ENCODE measurements at regions of chr10 and their contacts with region 1.

Region 1: GRCh38 chr10:93680412-93681047 is 21.9 kb downstream of the FRA10AC1 start:
- DNase-seq: peak; percentile 38
- ATAC-seq: peak; percentile 31; the same call in 1 of the 3 replicates
- H3K4me3 ChIP-seq: no peak overlapping the region
- H3K27ac ChIP-seq: no peak overlapping the region
- H3K4me1 ChIP-seq: no peaks in the 10 kb centered on the region
- H3K27me3 ChIP-seq: no peaks in the 10 kb centered on the region
- CTCF ChIP-seq: peak; percentile 71
- EP300 ChIP-seq: no peak
- POLR2A ChIP-seq: no peak
- RAD21 ChIP-seq: peak; percentile 72

Region 2: DNA sequence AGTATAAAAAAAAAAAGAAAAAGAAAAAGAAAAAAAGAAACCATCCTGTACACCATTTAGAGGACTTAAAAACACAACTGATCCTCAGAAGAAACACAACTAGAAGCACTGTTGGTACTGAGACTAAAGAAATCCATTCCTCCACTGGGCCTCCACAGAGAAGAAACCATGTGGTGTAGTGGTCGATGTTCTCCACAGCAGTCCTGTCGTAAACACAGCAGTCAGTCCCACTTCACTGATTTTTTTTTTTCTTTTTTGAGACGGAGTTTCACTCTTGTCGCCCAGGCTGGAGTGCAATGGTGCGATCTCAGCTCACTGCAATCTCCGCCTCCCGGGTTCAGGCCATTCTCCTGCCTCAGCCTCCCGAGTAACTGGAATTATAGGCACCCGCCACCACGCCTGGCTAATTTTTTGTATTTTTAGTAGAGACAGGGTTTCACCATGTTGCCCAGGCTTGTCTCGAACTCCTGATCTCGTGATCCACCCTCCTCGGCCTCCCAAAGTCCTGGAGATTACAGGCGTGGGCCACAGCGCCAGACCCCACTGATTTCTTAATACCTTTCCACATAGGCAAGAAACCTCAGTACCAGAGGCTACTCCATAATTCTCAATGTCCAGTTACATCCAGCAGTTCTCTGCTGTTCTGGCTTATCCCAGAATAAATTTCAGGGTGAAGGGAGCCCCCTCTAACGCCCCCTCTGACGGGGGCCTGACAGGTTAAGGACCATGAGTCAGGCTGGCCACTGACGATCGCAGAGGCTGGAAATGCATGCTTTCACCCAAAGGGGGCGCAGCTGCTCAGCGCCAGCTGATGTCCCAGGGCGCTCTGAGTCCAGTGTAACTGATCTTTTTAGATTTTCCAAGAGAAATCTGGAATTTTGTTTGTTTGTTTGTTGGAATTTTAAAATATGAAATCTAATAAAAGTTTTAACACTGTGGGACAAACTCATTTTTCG is 138.8 kb before region 1 on chr10:
- CTCF ChIA-PET with region 1: interaction called, 11 read pairs
- POLR2A ChIA-PET with region 1: no interaction called
- in situ Hi-C with region 1: no loop called
- intact Hi-C with region 1: loop called (anchors 2 kb)
- DNase-seq: peak; percentile 13
- ATAC-seq: peak; percentile 99
- H3K4me3 ChIP-seq: peak overlapping the region in 1 of 3 experiments; percentile 37; a peak in 1 of 6 replicates
- H3K27ac ChIP-seq: no peak overlapping the region
- H3K4me1 ChIP-seq: peaks cover 16% of the 10 kb centered on the region
- H3K27me3 ChIP-seq: no peaks in the 10 kb centered on the region; a peak in 1 of 5 replicates
- CTCF ChIP-seq: peak; percentile 84
- EP300 ChIP-seq: no peak
- POLR2A ChIP-seq: no peak
- RAD21 ChIP-seq: peak; percentile 52; the same call in 1 of the 2 replicates

Region 3: GRCh38 chr10:93554760-93555432 is 125.6 kb before region 1 on chr10:
- CTCF ChIA-PET with region 1: interaction called, 42 read pairs
- POLR2A ChIA-PET with region 1: interaction called, 7 read pairs
- in situ Hi-C with region 1: loop called (anchors 5 kb)
- intact Hi-C with region 1: loop called (anchors 1 kb)
- DNase-seq: peak; percentile 68
- ATAC-seq: peak; percentile 95
- H3K4me3 ChIP-seq: no peak overlapping the region; a peak in 1 of 6 replicates
- H3K27ac ChIP-seq: no peak overlapping the region
- H3K4me1 ChIP-seq: peaks cover 37% of the 10 kb centered on the region
- H3K27me3 ChIP-seq: peaks cover 0 to 4% of the 10 kb centered on the region in 2 experiments; a peak in 1 of 5 replicates
- CTCF ChIP-seq: peak; percentile 88
- EP300 ChIP-seq: no peak
- POLR2A ChIP-seq: no peak
- RAD21 ChIP-seq: peak; percentile 77

Region 4: DNA sequence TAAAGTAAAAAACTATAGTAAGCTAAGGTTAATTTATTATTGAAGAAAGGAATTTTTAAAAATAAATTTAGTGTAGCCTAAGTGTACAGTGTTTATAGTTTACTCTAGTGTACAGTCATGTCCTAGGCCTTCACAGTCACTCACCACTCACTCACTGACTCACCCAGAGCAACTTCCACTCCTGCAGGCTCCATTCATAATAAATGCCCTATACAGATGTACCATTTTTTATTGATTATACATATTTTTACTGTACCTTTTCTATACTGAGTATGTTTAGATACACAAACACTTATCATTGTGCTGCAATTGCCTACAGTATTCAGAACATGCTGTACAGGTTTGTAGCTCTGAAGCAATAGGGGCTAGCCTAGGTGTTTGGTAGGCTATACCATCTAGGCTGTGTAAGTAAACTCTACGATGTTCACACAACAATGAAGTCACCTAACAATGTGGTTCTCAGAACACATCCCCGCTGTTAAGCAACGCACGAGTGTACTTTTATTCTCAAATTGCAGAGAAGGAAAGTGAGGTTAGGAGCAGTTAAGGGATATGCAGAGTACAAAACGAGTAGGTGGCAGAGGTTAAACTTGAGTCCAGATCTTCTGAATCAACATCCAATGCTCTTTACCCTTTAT is 274.3 kb after region 1 on chr10:
- CTCF ChIA-PET with region 1: no interaction called
- POLR2A ChIA-PET with region 1: no interaction called
- in situ Hi-C with region 1: no loop called
- intact Hi-C with region 1: no loop called
- DNase-seq: no peak
- ATAC-seq: no peak
- H3K4me3 ChIP-seq: no peak overlapping the region
- H3K27ac ChIP-seq: no peak overlapping the region
- H3K4me1 ChIP-seq: no peaks in the 10 kb centered on the region
- H3K27me3 ChIP-seq: no peaks in the 10 kb centered on the region
- CTCF ChIP-seq: no peak
- EP300 ChIP-seq: no peak
- POLR2A ChIP-seq: no peak
- RAD21 ChIP-seq: no peak

Measured in HepG2 (cell line).